Lower leg skin (tissue), 4 donors: ENCODE measurements at regions of chr20 and their contacts with region 1.

Region 1: GRCh38 chr20:31822421-31823330 is 3.5 kb downstream of the MYLK2 start:
- DNase-seq: peak; percentile 55 to 95
- H3K4me3 ChIP-seq: no peak overlapping the region
- CTCF ChIP-seq: peak in 2 of 3 donors; percentile 41 to 93
- POLR2A ChIP-seq: no peak

Region 2: GRCh38 chr20:31473331-31474096 is 349.2 kb before region 1 on chr20:
- intact Hi-C with region 1: no loop called
- DNase-seq: no peak
- H3K4me3 ChIP-seq: no peak overlapping the region
- CTCF ChIP-seq: no peak
- POLR2A ChIP-seq: no peak

Region 3: GRCh38 chr20:31781945-31782344 is 40.7 kb before region 1 on chr20:
- intact Hi-C with region 1: no loop called
- DNase-seq: no peak
- H3K4me3 ChIP-seq: no peak overlapping the region
- CTCF ChIP-seq: no peak
- POLR2A ChIP-seq: no peak

Region 4: DNA sequence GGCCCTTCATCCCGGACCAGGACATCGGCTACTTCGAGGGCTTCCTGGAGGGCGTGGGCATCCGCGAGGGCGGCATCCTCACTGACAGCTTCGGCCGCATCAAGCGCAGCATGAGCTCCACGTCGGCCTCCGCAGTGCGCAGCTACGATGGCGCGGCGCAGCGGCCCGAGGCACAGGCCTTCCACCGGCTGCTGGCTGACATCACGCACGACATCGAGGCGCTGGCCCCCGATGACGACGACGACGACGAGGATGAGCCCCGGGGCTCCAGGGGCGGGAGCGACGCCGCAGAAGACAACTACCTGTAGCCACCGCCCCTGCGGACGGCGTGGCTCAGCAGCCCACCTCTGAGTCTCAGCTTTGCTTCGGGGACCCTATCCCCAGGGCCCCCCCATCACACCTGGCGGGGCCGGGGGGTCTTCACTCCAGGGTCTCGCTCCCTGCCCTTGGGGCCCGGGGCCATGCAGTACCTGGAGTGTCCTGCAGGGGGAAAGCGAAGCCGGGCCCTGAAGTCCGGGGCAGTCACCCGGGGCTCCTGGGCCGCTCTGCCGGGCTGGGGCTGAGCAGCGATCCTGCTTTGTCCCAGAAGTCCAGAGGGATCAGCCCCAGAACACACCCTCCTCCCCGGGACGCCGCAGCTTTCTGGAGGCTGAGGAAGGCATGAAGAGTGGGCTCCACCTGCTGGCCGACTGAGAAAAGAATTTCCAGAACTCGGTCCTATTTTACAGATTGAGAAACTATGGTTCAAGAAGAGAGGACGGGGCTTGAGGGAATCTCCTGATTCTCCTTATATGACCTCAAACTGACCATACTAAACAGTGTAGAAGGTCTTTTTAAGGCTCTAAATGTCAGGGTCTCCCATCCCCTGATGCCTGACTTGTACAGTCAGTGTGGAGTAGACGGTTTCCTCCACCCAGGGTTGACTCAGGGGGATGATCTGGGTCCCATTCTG is 208.6 kb after region 1 on chr20:
- intact Hi-C with region 1: loop called (anchors 5 kb)
- DNase-seq: peak; percentile 63 to 92
- H3K4me3 ChIP-seq: no peak overlapping the region
- CTCF ChIP-seq: peak in 1 of 3 donors; percentile 64
- POLR2A ChIP-seq: no peak